Activated B cell treated with CpG ODN at 0.5 μM for 24 hours (primary cell): ENCODE measurements at regions of chr16 and their contacts with region 1.

Region 1: DNA sequence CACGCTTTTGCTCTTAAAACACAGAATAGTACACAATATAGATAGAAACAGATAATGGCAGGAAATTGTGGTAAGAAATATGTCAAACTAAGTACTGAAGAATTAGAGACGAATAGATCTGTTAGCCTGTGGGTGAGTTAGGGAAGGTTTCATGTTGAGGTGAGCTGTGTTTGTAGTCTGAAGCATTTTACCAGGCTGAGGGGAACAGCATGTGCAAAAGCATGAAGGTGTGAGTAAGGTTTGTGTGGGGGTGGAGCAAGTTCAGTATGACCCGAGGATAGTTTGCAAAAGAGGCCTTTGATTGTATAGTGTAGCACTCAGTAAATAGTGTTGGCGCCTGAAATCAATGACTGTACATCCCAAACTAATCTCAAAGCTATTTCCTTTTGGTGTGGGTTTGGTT is 13.8 kb downstream of the IGSF6 start:
- DNase-seq: no peak
- ATAC-seq: no peak
- H3K4me3 Mint-ChIP-seq: no peak overlapping the region
- H3K27ac Mint-ChIP-seq: no peak overlapping the region
- H3K4me1 Mint-ChIP-seq: peaks cover 8% of the 10 kb centered on the region
- H3K27me3 Mint-ChIP-seq: no peaks in the 10 kb centered on the region
- CTCF ChIP-seq: no peak

Region 2: DNA sequence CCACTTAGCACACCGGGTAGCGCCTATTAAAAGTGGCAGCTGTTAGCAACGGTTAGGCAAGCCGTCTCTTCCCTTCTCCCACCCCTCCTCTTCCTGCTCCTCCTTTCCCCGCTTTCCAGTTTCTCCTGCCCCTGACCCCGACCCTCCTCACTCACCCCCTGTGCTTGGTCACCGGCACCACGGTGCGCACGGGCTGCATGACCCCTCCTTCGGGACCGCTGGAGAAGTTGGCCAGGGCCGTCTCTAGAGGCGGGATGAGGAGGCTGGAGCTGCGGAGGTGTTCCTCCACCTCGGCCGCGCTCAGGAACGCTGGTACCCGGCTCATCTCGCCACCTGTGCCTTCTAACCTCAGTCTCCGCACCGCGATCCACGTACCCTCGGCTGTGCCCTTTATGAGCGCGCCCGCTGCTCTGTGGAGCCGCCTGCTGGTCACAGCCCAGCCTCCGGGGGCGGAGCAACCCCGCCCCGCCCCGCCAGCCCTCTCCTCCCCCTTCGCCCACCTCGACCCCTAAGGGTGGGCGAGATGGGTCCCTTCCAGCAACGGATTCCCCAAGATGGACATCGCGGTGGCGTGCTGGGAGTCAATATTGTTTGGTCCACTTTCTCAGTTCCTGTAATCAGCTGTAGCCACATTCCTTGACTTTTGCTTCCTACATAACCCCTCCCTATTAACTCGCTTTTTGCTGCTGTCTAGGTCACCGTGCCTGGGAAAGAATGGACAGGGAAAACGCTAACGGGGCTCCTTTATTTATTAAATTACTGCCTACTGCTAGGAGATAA is 360.5 kb before region 1 on chr16 and contains the start of gene CRYM:
- CTCF ChIA-PET with region 1: no interaction called
- POLR2A ChIA-PET with region 1: no interaction called
- intact Hi-C with region 1: no loop called
- DNase-seq: peak; percentile 76
- ATAC-seq: peak; percentile 95
- H3K4me3 Mint-ChIP-seq: peak within 1 kb of the TSS; percentile 79
- H3K27ac Mint-ChIP-seq: no peak within 1 kb of the TSS
- H3K4me1 Mint-ChIP-seq: peaks cover 46% of the 10 kb centered on the region
- H3K27me3 Mint-ChIP-seq: peaks cover 16% of the 10 kb centered on the region
- CTCF ChIP-seq: peak; percentile 42
- total RNA-seq, gene CRYM: 4.2 and 4.5 TPM in 2 replicates

Region 3: GRCh38 chr16:21584817-21585216 is 53.8 kb before region 1 on chr16:
- CTCF ChIA-PET with region 1: interaction called, 35 read pairs
- POLR2A ChIA-PET with region 1: interaction called, 5 read pairs
- intact Hi-C with region 1: loop called (anchors 1 kb)
- DNase-seq: no peak
- ATAC-seq: no peak
- H3K4me3 Mint-ChIP-seq: no peak overlapping the region
- H3K27ac Mint-ChIP-seq: no peak overlapping the region
- H3K4me1 Mint-ChIP-seq: peaks cover 12% of the 10 kb centered on the region
- H3K27me3 Mint-ChIP-seq: no peaks in the 10 kb centered on the region
- CTCF ChIP-seq: no peak

Region 4: GRCh38 chr16:21727344-21727743 is 88.8 kb after region 1 on chr16:
- CTCF ChIA-PET with region 1: no interaction called
- POLR2A ChIA-PET with region 1: no interaction called
- intact Hi-C with region 1: no loop called
- DNase-seq: no peak
- ATAC-seq: no peak
- H3K4me3 Mint-ChIP-seq: no peak overlapping the region
- H3K27ac Mint-ChIP-seq: peak overlapping the region; percentile 35
- H3K4me1 Mint-ChIP-seq: peaks cover 6% of the 10 kb centered on the region
- H3K27me3 Mint-ChIP-seq: no peaks in the 10 kb centered on the region
- CTCF ChIP-seq: no peak

Region 5: DNA sequence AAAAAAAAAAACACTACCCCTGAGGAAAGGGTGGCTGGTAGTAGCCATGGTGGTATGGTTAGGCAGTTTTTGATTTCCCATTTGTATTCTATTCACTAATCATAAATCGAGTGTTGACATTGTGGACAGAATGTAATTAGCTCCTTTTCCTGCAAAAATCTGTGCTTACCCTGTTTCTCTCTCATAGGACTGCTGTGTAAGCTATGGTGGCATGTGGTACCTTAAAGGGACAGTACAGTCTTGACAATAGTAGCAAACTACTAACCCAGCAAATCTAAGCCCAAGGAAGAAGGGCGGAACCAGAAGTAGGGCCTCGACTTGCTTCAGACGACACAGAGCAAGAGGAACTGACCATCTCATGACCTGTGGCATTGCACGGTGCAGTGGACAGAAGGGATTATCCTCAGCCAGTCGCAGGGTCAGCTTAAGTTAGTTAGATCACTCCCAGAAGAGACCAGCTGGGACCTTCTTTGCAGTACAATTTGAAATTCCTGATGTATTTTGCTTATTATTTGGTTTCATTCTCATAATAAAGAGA is 695.0 kb after region 1 on chr16:
- CTCF ChIA-PET with region 1: no interaction called
- POLR2A ChIA-PET with region 1: no interaction called
- intact Hi-C with region 1: no loop called
- DNase-seq: no peak
- ATAC-seq: no peak
- H3K4me3 Mint-ChIP-seq: no peak overlapping the region
- H3K27ac Mint-ChIP-seq: no peak overlapping the region
- H3K4me1 Mint-ChIP-seq: no peaks in the 10 kb centered on the region
- H3K27me3 Mint-ChIP-seq: no peaks in the 10 kb centered on the region
- CTCF ChIP-seq: no peak

Region 6: GRCh38 chr16:22948603-22949368 is 1310.2 kb after region 1 on chr16:
- CTCF ChIA-PET with region 1: no interaction called
- POLR2A ChIA-PET with region 1: no interaction called
- intact Hi-C with region 1: loop called (anchors 2 kb)
- DNase-seq: peak; percentile 26
- ATAC-seq: peak; percentile 73
- H3K4me3 Mint-ChIP-seq: peak overlapping the region; percentile 46
- H3K27ac Mint-ChIP-seq: no peak overlapping the region
- H3K4me1 Mint-ChIP-seq: peaks cover 11% of the 10 kb centered on the region
- H3K27me3 Mint-ChIP-seq: peaks cover 26% of the 10 kb centered on the region
- CTCF ChIP-seq: no peak